ENCODE measurements at regions of chrX and their contacts with region 1.

Region 1: GRCh38 chrX:85611926-85612325 is 232.5 kb upstream of the POF1B start:
- DNase-seq: no peak
- H3K4me3 ChIP-seq: no peak overlapping the region
- H3K27ac ChIP-seq: no peak overlapping the region
- H3K4me1 ChIP-seq: no peaks in the 10 kb centered on the region
- H3K27me3 ChIP-seq: no peaks in the 10 kb centered on the region
- CTCF ChIP-seq: peak; percentile 54

Region 2: GRCh38 chrX:86066997-86067396 is 455.1 kb after region 1 on chrX:
- CTCF ChIA-PET with region 1: no interaction called
- POLR2A ChIA-PET with region 1: no interaction called
- intact Hi-C with region 1: loop called (anchors 10 kb)
- DNase-seq: no peak
- H3K4me3 ChIP-seq: no peak overlapping the region
- H3K27ac ChIP-seq: no peak overlapping the region
- H3K4me1 ChIP-seq: no peaks in the 10 kb centered on the region
- H3K27me3 ChIP-seq: no peaks in the 10 kb centered on the region
- CTCF ChIP-seq: no peak

Region 3: DNA sequence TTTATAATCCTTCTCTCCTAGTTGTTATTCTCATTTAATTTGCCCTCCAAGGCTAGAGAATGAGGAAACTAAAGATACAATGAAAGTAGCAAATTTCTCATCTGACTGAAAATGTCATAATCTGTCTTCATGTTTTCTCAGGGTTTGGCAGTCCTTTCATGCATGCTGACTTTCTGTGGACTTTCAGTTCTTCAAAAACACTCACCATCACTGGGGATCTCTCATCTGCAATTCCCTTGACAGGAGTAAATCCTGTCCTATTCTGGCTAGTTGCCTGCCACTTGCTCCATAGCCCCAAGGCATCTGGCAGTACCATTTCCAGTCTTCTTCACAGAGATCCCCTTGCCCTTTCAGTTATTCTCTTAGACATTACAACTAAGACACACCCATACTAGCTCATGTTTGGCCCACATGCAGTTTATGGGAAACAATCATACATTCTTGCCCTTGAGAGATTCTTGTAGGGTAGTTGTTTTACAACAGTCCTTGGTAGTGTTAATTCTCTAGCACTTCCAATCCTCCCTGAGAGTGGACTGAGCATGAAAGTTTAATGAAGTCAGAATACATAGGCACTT is 1456.0 kb after region 1 on chrX:
- CTCF ChIA-PET with region 1: no interaction called
- POLR2A ChIA-PET with region 1: no interaction called
- intact Hi-C with region 1: no loop called
- DNase-seq: no peak
- H3K4me3 ChIP-seq: no peak overlapping the region
- H3K27ac ChIP-seq: no peak overlapping the region
- H3K4me1 ChIP-seq: no peaks in the 10 kb centered on the region
- H3K27me3 ChIP-seq: no peaks in the 10 kb centered on the region
- CTCF ChIP-seq: no peak

Measured in PC-9 (cell line).